Activated CD4-positive, alpha-beta memory T cell treated with anti-CD3 and anti-CD28 coated beads for 36 hours (primary cell): ENCODE measurements at regions of chr4 and their contacts with region 1.

Region 1: GRCh38 chr4:122814426-122814825 is 12.2 kb upstream of the FGF2 start:
- DNase-seq: no peak
- H3K4me3 Mint-ChIP-seq: no peak overlapping the region
- H3K27ac Mint-ChIP-seq: no peak overlapping the region
- H3K4me1 Mint-ChIP-seq: peaks cover 7% of the 10 kb centered on the region
- H3K27me3 Mint-ChIP-seq: peaks cover 13% of the 10 kb centered on the region

Region 2: GRCh38 chr4:122764821-122765215 is 49.6 kb before region 1 on chr4:
- CTCF ChIA-PET with region 1: no interaction called
- POLR2A ChIA-PET with region 1: no interaction called
- intact Hi-C with region 1: loop called (anchors 1 kb)
- DNase-seq: no peak
- H3K4me3 Mint-ChIP-seq: no peak overlapping the region
- H3K27ac Mint-ChIP-seq: peak overlapping the region; percentile 3
- H3K4me1 Mint-ChIP-seq: peaks cover 18% of the 10 kb centered on the region
- H3K27me3 Mint-ChIP-seq: no peaks in the 10 kb centered on the region

Region 3: GRCh38 chr4:122783301-122784215 is 30.9 kb before region 1 on chr4:
- CTCF ChIA-PET with region 1: no interaction called
- POLR2A ChIA-PET with region 1: no interaction called
- intact Hi-C with region 1: loop called (anchors 1 kb)
- DNase-seq: no peak
- H3K4me3 Mint-ChIP-seq: no peak overlapping the region
- H3K27ac Mint-ChIP-seq: no peak overlapping the region
- H3K4me1 Mint-ChIP-seq: peaks cover 16% of the 10 kb centered on the region
- H3K27me3 Mint-ChIP-seq: no peaks in the 10 kb centered on the region

Region 4: GRCh38 chr4:122827879-122828601 is 13.6 kb after region 1 on chr4:
- CTCF ChIA-PET with region 1: no interaction called
- POLR2A ChIA-PET with region 1: interaction called, 4 read pairs
- intact Hi-C with region 1: loop called (anchors 1 kb)
- DNase-seq: peak; percentile 68
- H3K4me3 Mint-ChIP-seq: peak overlapping the region; percentile 74
- H3K27ac Mint-ChIP-seq: peak overlapping the region; percentile 3
- H3K4me1 Mint-ChIP-seq: peaks cover 13% of the 10 kb centered on the region
- H3K27me3 Mint-ChIP-seq: peaks cover 63% of the 10 kb centered on the region

Region 5: DNA sequence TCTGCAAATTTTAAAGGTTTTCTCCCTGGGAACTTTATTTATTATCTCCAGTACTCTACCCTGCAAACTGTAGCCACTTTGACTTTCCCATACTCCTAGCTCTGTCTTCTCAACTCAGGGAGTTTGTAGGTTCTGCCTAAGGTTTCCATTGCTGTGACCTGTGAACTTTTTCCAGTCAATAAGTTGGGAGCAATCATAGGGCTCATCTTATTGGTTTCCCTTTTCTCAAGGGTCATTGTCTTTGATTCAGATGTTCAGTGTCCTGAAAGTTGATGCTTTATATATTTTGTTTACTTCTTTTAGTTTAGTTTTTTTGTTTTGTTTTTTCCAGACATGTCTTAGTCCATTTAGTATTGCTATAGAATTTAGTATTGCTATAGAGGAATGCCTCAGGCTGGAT is 193.3 kb after region 1 on chr4:
- CTCF ChIA-PET with region 1: no interaction called
- POLR2A ChIA-PET with region 1: no interaction called
- intact Hi-C with region 1: no loop called
- DNase-seq: no peak
- H3K4me3 Mint-ChIP-seq: no peak overlapping the region
- H3K27ac Mint-ChIP-seq: no peak overlapping the region
- H3K4me1 Mint-ChIP-seq: no peaks in the 10 kb centered on the region
- H3K27me3 Mint-ChIP-seq: no peaks in the 10 kb centered on the region